Right cardiac atrium (tissue), 5 donors: ENCODE measurements at regions of chr6 and their contacts with region 1.

Region 1: GRCh38 chr6:100116411-100117194 is 122.6 kb upstream of the MCHR2 start:
- DNase-seq: peak in 1 of 3 donors; percentile 24
- ATAC-seq: peak in 1 of 2 donors; percentile 38
- H3K4me3 ChIP-seq: no peak overlapping the region
- H3K27ac ChIP-seq: no peak overlapping the region
- H3K4me1 ChIP-seq: no peaks in the 10 kb centered on the region
- H3K27me3 ChIP-seq: no peaks in the 10 kb centered on the region

Region 2: DNA sequence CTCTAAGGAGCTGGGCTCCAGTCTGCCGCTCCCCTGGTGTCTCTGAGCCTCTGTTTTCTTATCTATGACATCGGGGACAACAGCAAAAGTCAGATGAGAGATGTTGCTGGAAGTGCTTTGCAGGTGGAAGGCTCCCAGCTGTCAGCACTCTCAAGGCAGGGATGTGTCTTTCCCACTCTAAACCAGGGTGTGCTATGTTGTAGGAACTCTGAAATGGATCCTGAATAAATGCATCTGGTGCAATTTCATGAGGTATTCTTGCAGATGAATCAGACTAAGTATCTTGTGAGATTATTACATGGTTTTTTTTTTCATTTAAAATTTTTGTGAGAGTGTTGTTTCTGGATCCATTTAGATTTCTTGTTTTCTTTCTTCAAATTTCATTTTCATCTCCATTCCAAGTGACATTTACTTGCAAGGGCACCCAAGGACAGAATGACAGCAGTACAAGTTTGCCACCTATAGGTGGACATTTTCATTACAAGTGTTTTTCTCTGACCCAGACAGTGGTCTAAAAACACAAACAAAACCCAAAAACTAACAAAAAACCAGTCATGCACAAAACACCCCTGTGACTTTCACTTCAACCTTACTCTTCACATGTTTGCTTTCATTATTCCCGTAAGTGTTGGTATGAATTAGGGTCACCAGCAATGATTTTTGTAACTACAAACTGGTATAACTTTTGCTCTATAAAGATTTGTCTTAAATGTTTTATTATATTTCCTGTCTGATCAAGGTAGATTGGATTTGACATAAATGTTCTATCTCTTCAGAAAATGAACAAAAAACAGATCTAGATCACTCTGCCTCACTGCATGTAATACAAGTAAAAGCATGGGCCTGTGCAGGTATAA is 362.8 kb after region 1 on chr6:
- intact Hi-C with region 1: loop called (anchors 5 to 10 kb)
- DNase-seq: no peak
- ATAC-seq: peak in 1 of 2 donors; percentile 55
- H3K4me3 ChIP-seq: no peak overlapping the region
- H3K27ac ChIP-seq: no peak overlapping the region
- H3K4me1 ChIP-seq: no peaks in the 10 kb centered on the region
- H3K27me3 ChIP-seq: no peaks in the 10 kb centered on the region

Region 3: GRCh38 chr6:100657678-100658330 is 541.2 kb after region 1 on chr6:
- intact Hi-C with region 1: loop called in 1 of 4 experiments (anchors 10 kb)
- DNase-seq: no peak
- ATAC-seq: no peak
- H3K4me3 ChIP-seq: no peak overlapping the region
- H3K27ac ChIP-seq: no peak overlapping the region
- H3K4me1 ChIP-seq: no peaks in the 10 kb centered on the region
- H3K27me3 ChIP-seq: no peaks in the 10 kb centered on the region